ENCODE measurements at regions of chr12 and their contacts with region 1.

Region 1: DNA sequence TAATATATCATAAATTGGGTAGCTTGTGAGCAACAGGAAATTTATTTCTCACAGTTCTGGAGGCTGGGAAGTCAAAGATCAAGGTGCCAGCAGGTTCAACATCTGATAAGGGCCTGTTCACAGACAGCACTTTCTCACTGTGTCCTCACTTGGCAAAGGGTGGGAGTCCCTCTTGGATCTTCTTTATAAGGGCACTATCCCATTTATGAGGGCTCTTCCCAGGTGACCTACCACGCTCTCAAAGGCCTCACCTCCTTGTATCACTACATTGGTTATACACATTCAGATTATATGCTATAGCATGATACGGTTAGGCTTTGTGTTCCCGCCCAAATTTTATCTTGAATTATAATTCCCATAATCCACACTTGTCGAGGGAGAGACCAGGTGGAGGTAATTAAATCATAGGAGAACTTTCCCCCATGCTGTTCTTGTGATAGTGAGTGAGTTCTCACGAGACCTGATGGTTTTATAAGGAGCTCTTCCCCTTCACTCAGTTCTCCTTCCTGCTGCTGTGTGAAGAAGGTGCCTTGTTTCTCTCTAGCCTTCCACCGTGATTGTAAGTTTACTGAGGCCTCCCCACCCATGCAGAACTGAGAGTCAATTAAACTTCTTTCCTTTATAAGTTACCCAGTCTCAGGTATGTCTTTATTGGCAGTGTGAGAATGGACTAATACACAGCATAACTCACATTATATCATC is 19.2 kb upstream of the LRIG3 start:
- DNase-seq: peak; percentile 53
- H3K4me3 Mint-ChIP-seq: peak overlapping the region; percentile 44
- H3K27ac Mint-ChIP-seq: peak overlapping the region; percentile 93
- H3K4me1 Mint-ChIP-seq: peaks cover 64% of the 10 kb centered on the region
- H3K27me3 Mint-ChIP-seq: no peaks in the 10 kb centered on the region
- CTCF ChIP-seq: no peak

Region 2: DNA sequence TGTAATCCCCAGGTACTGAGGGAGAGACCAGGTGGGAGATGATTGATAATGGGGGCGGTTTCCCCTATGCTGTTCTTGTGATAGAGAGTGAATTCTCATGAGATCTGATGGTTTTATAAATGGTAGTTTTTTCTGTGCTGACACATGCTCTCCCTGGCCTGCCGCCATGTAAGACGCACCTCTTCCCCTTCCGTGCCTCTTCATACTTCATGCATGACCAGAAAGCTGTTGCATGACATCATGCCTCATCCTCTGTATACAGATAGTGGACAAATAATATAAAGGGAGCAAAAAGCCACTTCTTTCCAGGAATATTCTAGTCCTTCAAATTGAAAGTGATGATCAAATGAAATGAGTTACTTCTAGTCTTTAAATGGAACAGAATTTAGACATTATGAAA is 28.0 kb after region 1 on chr12:
- CTCF ChIA-PET with region 1: no interaction called
- intact Hi-C with region 1: no loop called
- DNase-seq: no peak
- H3K4me3 Mint-ChIP-seq: no peak overlapping the region
- H3K27ac Mint-ChIP-seq: no peak overlapping the region
- H3K4me1 Mint-ChIP-seq: peaks cover 31% of the 10 kb centered on the region
- H3K27me3 Mint-ChIP-seq: no peaks in the 10 kb centered on the region
- CTCF ChIP-seq: no peak

Region 3: GRCh38 chr12:59041241-59042121 is 101.9 kb after region 1 on chr12:
- CTCF ChIA-PET with region 1: no interaction called
- intact Hi-C with region 1: loop called (anchors 1 kb)
- DNase-seq: peak; percentile 51
- H3K4me3 Mint-ChIP-seq: peak overlapping the region; percentile 28
- H3K27ac Mint-ChIP-seq: peak overlapping the region; percentile 94
- H3K4me1 Mint-ChIP-seq: peaks cover 65% of the 10 kb centered on the region
- H3K27me3 Mint-ChIP-seq: no peaks in the 10 kb centered on the region
- CTCF ChIP-seq: no peak